MCF 10A (cell line): ENCODE measurements at regions of chr9 and their contacts with region 1.

Region 1: DNA sequence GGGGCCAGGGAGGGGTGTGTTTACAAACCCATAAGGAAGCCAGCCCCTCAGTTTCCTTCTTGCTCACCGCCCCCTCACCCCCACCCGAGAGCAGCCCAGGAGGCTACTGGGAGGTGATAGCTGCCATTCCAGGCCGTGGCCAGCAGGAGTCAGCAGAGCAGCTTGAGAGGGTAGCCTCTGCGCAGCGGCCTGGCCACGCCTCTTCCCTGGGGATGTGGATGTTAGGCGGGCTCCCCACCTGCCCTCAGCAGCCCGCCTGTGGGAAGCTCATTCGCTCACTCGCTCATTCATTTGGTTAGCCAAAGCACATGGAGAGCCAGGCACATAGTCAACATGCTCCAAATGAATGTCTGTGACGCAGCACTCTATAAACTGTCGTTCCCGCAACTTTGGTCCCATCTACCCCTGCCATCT is 6.1 kb upstream of the DPM2 start:
- DNase-seq: peak; percentile 73
- H3K4me3 Mint-ChIP-seq: no peak overlapping the region
- H3K27ac Mint-ChIP-seq: no peak overlapping the region
- H3K4me1 Mint-ChIP-seq: peaks cover 11% of the 10 kb centered on the region
- H3K27me3 Mint-ChIP-seq: no peaks in the 10 kb centered on the region
- CTCF ChIP-seq: peak; percentile 91

Region 2: GRCh38 chr9:127970401-127971313 is 26.9 kb after region 1 on chr9:
- CTCF ChIA-PET with region 1: interaction called, 27 read pairs
- POLR2A ChIA-PET with region 1: interaction called, 3 read pairs
- intact Hi-C with region 1: no loop called
- DNase-seq: no peak
- H3K4me3 Mint-ChIP-seq: no peak overlapping the region
- H3K27ac Mint-ChIP-seq: peak overlapping the region; percentile 98
- H3K4me1 Mint-ChIP-seq: peaks cover 58% of the 10 kb centered on the region
- H3K27me3 Mint-ChIP-seq: no peaks in the 10 kb centered on the region
- CTCF ChIP-seq: no peak

Region 3: DNA sequence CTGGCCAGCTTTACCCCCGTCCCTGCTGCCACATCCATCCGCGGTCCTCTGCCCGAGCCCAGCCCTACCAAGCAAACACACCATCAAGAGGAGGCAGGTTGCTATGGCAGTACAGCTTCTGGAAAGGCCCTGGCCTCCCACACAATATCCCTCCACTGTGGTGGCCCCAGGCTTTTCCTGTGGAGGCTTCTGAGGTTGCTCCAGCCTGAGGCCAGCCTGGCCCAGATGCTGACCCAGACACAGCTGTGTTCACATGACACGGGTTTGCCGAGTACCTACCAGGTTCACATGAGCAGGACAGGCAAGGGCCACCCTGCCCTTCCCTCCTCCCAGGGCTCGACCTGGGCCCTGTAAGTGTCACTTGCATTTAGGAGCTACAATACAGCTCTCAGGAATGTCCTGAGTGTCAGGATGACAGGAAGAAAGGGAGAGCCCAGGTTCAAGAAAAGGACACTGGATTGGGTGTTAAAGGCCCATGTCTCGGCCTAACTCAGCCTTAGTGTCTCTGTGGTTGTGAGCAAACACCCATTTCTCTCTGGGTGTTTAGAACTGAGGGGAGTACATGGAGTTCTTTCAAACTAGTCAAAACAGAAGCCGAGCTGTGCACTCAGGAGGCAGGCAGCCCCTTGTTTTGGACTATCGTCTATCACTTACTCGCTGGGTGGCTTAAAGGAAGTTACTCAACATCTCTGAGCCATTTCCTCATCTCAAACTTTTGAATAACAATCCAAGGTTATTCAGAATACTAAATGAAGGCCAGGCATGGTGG is 83.2 kb after region 1 on chr9:
- CTCF ChIA-PET with region 1: interaction called, 17 read pairs
- POLR2A ChIA-PET with region 1: no interaction called
- intact Hi-C with region 1: no loop called
- DNase-seq: no peak
- H3K4me3 Mint-ChIP-seq: no peak overlapping the region
- H3K27ac Mint-ChIP-seq: no peak overlapping the region
- H3K4me1 Mint-ChIP-seq: peaks cover 8% of the 10 kb centered on the region
- H3K27me3 Mint-ChIP-seq: no peaks in the 10 kb centered on the region
- CTCF ChIP-seq: no peak

Region 4: GRCh38 chr9:128043467-128043868 is 99.7 kb after region 1 on chr9:
- CTCF ChIA-PET with region 1: interaction called, 35 read pairs
- POLR2A ChIA-PET with region 1: no interaction called
- intact Hi-C with region 1: no loop called
- DNase-seq: no peak
- H3K4me3 Mint-ChIP-seq: no peak overlapping the region
- H3K27ac Mint-ChIP-seq: no peak overlapping the region
- H3K4me1 Mint-ChIP-seq: no peaks in the 10 kb centered on the region
- H3K27me3 Mint-ChIP-seq: no peaks in the 10 kb centered on the region
- CTCF ChIP-seq: no peak

Region 5: DNA sequence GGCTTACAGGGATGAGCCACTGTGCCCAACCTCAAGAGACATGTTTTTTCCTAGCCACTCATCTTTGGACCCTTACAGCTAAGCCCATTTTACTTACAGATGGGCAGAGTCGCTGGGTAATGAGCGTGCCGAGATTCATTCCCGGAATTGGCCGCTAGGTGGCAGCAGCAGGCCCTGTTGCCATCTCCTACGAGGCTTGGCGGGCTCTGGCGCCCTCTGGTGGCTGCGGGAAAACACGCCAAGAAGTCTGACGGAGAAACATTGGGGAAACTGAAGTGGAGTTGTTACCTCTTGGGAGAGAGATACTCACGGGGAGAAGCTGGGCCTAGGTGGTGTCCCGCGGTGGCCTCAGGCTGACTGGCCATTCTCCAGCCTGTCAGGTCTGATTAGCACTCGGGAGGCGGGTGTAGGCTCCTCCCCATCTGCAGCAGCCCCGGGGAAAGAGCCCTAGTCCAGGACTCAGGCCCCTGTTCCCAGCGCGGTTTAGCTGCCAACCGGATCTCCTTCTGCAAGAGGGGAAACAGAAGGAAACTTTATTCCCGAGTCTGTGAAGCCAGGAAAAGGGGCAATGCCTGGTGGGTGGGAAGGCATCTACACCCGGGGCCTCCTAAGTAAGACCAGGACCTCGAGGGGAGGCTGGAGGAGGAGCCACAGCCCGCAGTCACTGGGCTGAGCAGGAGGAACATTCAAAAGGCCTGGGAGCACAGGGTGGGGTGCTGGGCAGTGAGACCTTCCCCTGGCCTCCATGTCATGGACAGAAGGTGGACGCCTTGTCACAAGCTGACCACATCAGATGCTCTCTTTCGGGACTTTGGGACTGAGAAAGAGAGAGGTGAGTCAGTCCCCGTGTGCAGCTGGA is 174.1 kb after region 1 on chr9:
- CTCF ChIA-PET with region 1: interaction called, 24 read pairs
- POLR2A ChIA-PET with region 1: no interaction called
- intact Hi-C with region 1: loop called (anchors 1 kb)
- DNase-seq: peak; percentile 87
- H3K4me3 Mint-ChIP-seq: no peak overlapping the region
- H3K27ac Mint-ChIP-seq: no peak overlapping the region
- H3K4me1 Mint-ChIP-seq: no peaks in the 10 kb centered on the region
- H3K27me3 Mint-ChIP-seq: no peaks in the 10 kb centered on the region
- CTCF ChIP-seq: peak; percentile 100